Aorta (tissue), 5 donors: ENCODE measurements at regions of chr19 and their contacts with region 1.

Region 1: DNA sequence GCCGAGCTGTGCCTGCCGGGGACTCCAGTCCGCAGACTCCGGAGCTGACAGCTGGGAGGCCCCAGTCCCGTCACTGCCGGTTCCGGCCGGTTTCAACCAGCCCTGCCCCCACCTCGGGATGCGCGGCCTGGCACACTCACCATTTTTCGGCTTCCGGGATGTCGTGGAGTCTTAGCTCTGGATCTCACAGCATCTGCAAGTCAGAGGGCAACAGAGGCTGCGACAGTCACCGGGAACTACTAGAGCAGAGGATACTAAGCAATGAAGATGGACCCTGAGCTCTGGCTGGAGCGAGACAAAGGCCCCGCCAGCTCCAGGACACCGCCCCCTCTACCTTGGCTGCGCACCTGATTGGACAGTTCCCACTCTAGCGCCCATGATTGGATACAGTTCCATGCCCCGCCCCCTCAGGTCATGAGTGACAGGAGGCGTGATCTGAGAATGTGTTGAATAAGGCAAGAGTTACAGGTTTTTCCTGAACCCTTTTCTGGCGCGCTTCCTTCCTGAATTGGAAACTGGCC is at the start of gene ZNF682:
- DNase-seq: peak; percentile 95 to 96
- ATAC-seq: peak; percentile 100
- H3K4me3 ChIP-seq: peak within 1 kb of the TSS; percentile 71 to 93
- H3K27ac ChIP-seq: peak within 1 kb of the TSS in 1 of 2 donors; percentile 15
- H3K4me1 ChIP-seq: no peaks in the 10 kb centered on the region
- H3K27me3 ChIP-seq: no peaks in the 10 kb centered on the region
- total RNA-seq, gene ZNF682: 4.2 to 7.5 TPM

Region 2: GRCh38 chr19:20051841-20052768 is 12.8 kb after region 1 on chr19:
- intact Hi-C with region 1: loop called in 1 of 2 experiments (anchors 2 kb)
- DNase-seq: peak; percentile 96 to 97
- ATAC-seq: peak; percentile 99
- H3K4me3 ChIP-seq: peak overlapping the region; percentile 37 to 51
- H3K27ac ChIP-seq: peak overlapping the region in 1 of 2 donors; percentile 73
- H3K4me1 ChIP-seq: no peaks in the 10 kb centered on the region
- H3K27me3 ChIP-seq: no peaks in the 10 kb centered on the region